Activated CD4-positive, alpha-beta T cell treated with anti-CD3 and anti-CD28 coated beads, Interleukin-2, amount 10 ng/mL, durations not matched to agents 24 days and 14 days (primary cell): ENCODE measurements at regions of chr20 and their contacts with region 1.

Region 1: GRCh38 chr20:44115762-44116644 is 71.0 kb downstream of the JPH2 start:
- DNase-seq: no peak
- H3K4me3 Mint-ChIP-seq: no peak overlapping the region
- H3K27ac Mint-ChIP-seq: no peak overlapping the region
- H3K4me1 Mint-ChIP-seq: peaks cover 9% of the 10 kb centered on the region
- H3K27me3 Mint-ChIP-seq: peaks cover 26% of the 10 kb centered on the region

Region 2: DNA sequence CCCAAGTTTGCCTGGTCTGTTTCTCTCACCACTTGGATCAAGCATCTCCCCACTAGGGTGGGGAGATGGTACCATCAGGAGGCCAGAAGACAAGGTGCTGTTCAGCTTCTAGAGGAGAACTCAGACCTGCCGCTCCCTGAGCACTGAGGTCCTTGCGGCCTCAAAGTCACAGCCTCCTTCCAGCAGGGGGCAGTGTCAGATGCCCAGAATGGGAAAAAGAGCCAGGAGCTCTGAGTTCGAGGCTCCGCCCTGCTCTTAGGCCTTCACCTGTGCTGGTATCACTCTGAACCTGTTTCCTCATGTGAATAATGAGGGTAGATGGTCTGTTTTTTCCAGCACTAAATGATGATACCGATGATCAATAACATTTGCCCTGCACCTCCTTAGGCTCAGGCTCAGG is 132.6 kb before region 1 on chr20:
- intact Hi-C with region 1: no loop called
- DNase-seq: peak; percentile 76
- H3K4me3 Mint-ChIP-seq: no peak overlapping the region
- H3K27ac Mint-ChIP-seq: no peak overlapping the region
- H3K4me1 Mint-ChIP-seq: peaks cover 14% of the 10 kb centered on the region
- H3K27me3 Mint-ChIP-seq: peaks cover 16% of the 10 kb centered on the region

Region 3: GRCh38 chr20:44187051-44187762 is 71.2 kb after region 1 on chr20 and contains the start of gene JPH2:
- intact Hi-C with region 1: loop called (anchors 1 kb)
- DNase-seq: no peak
- H3K4me3 Mint-ChIP-seq: peak within 1 kb of the TSS; percentile 50
- H3K27ac Mint-ChIP-seq: no peak within 1 kb of the TSS
- H3K4me1 Mint-ChIP-seq: peaks cover 9% of the 10 kb centered on the region
- H3K27me3 Mint-ChIP-seq: peaks cover 50% of the 10 kb centered on the region
- total RNA-seq, gene JPH2: 0.05 TPM in 1 of 2 replicates, not detected in the other